ENCODE measurements at regions of chr17 and their contacts with region 1.

Region 1: GRCh38 chr17:43388359-43389045 is 10.3 kb upstream of the ARL4D start:
- DNase-seq: peak; percentile 96
- ATAC-seq: peak; percentile 74
- H3K4me3 ChIP-seq: peak overlapping the region; percentile 63 to 95 (median 91)
- H3K4me3 Mint-ChIP-seq: peak overlapping the region; percentile 89
- H3K27ac ChIP-seq: peak overlapping the region; percentile 95 to 96
- H3K27ac Mint-ChIP-seq: peak overlapping the region; percentile 98
- H3K4me1 ChIP-seq: peaks cover 18 to 21% of the 10 kb centered on the region in 2 donors
- H3K4me1 Mint-ChIP-seq: peaks cover 38% of the 10 kb centered on the region
- H3K27me3 ChIP-seq: no peaks in the 10 kb centered on the region
- H3K27me3 Mint-ChIP-seq: no peaks in the 10 kb centered on the region
- CTCF ChIP-seq: no peak

Region 2: GRCh38 chr17:42980398-42981397 is 407.8 kb before region 1 on chr17 and contains the start of gene RUNDC1:
- CTCF ChIA-PET with region 1: no interaction called
- POLR2A ChIA-PET with region 1: no interaction called
- intact Hi-C with region 1: loop called (anchors 1 kb)
- DNase-seq: peak; percentile 97
- ATAC-seq: peak; percentile 82
- H3K4me3 ChIP-seq: peak within 1 kb of the TSS; percentile 83 to 90 (median 88)
- H3K4me3 Mint-ChIP-seq: peak within 1 kb of the TSS; percentile 99
- H3K27ac ChIP-seq: peak within 1 kb of the TSS; percentile 80 to 86
- H3K27ac Mint-ChIP-seq: peak within 1 kb of the TSS; percentile 96
- H3K4me1 ChIP-seq: peaks cover 44 to 56% of the 10 kb centered on the region in 2 donors
- H3K4me1 Mint-ChIP-seq: peaks cover 48% of the 10 kb centered on the region
- H3K27me3 ChIP-seq: no peaks in the 10 kb centered on the region
- H3K27me3 Mint-ChIP-seq: no peaks in the 10 kb centered on the region
- CTCF ChIP-seq: peak; percentile 42
- total RNA-seq, gene RUNDC1: 43.7 and 45.6 TPM in 2 replicates

Region 3: DNA sequence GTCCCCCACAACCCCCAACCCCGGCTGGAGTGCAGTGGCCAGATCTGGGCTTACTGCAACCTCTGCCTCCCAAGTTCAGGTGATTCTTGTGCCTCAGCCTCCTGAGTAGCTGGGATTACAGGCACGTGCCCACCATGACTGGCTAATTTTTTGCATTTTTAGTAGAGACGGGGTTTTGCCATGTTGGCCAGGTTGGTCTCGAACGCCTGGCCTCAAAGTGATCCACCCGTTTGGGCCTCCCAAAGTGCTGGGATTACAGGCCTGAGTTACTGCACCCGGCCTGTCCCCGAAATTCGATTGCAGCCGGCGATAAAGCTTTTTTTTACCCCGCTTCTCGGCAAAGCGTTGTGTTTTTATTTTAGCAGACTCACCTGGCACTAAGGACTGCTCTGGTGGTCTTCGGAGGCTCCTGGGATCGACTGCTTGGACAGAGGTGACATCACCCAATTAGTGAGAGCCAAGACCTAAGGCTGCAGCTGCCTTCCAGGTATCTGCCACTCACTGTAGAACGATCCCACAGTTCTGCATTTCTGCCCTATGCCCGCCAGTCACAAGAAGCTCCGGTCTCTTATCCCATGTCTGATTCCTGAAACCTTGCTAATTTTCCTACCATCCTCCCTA is 71.9 kb before region 1 on chr17:
- CTCF ChIA-PET with region 1: interaction called, 5 read pairs
- POLR2A ChIA-PET with region 1: interaction called, 11 read pairs
- intact Hi-C with region 1: loop called (anchors 1 kb)
- DNase-seq: peak; percentile 78
- ATAC-seq: no peak
- H3K4me3 ChIP-seq: peak overlapping the region in 1 of 5 experiments; percentile 25
- H3K4me3 Mint-ChIP-seq: peak overlapping the region; percentile 29
- H3K27ac ChIP-seq: peak overlapping the region in 1 of 2 donors; percentile 46
- H3K27ac Mint-ChIP-seq: no peak overlapping the region
- H3K4me1 ChIP-seq: peaks cover 0 to 4% of the 10 kb centered on the region in 2 donors
- H3K4me1 Mint-ChIP-seq: peaks cover 16% of the 10 kb centered on the region
- H3K27me3 ChIP-seq: no peaks in the 10 kb centered on the region
- H3K27me3 Mint-ChIP-seq: no peaks in the 10 kb centered on the region
- CTCF ChIP-seq: no peak

Region 4: GRCh38 chr17:43360739-43361505 is 27.6 kb before region 1 on chr17:
- CTCF ChIA-PET with region 1: interaction called, 71 read pairs
- POLR2A ChIA-PET with region 1: interaction called, 220 read pairs
- intact Hi-C with region 1: loop called (anchors 2 kb)
- DNase-seq: peak; percentile 94
- ATAC-seq: peak; percentile 80
- H3K4me3 ChIP-seq: peak overlapping the region; percentile 61 to 88 (median 70)
- H3K4me3 Mint-ChIP-seq: peak overlapping the region; percentile 96
- H3K27ac ChIP-seq: peak overlapping the region; percentile 97 to 99
- H3K27ac Mint-ChIP-seq: peak overlapping the region; percentile 100
- H3K4me1 ChIP-seq: peaks cover 9 to 15% of the 10 kb centered on the region in 2 donors
- H3K4me1 Mint-ChIP-seq: peaks cover 21% of the 10 kb centered on the region
- H3K27me3 ChIP-seq: no peaks in the 10 kb centered on the region
- H3K27me3 Mint-ChIP-seq: no peaks in the 10 kb centered on the region
- CTCF ChIP-seq: no peak

Region 5: DNA sequence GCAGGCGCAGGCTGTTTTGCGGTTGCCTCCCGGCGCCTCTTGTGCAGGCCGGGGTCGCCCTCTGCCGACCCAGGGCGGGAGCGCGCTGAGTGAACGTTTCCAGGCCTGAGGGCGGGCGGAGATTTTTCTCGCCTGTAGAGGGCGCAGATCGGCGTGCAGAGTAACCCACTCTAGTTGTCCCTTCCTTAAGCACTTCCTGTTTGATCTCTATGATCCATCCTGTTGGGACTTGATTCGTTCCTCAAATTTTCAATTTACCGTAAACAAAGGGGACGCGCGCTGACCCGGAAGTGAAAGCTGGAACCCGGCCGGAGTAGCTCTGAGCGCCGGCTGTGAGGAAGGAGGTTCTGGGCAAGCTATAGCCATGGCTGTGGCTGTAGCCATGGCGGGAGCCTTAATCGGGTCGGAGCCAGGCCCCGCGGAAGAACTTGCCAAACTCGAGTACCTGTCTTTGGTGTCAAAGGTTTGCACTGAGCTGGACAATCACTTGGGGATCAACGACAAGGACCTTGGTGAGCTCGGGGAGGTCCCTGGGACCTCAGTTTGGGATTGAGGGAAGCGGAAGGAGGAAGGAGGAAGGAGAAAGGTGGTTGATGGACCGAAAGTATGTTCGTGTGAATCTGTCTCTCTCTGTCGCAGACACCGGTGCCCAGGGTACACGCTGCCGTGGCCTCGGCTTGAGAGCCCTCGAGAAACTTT is 95.3 kb after region 1 on chr17 and contains the start of gene DHX8:
- CTCF ChIA-PET with region 1: interaction called, 218 read pairs
- POLR2A ChIA-PET with region 1: interaction called, 22 read pairs
- intact Hi-C with region 1: loop called (anchors 1 kb)
- DNase-seq: peak; percentile 99
- ATAC-seq: peak; percentile 98
- H3K4me3 ChIP-seq: peak within 1 kb of the TSS; percentile 84 to 99 (median 98)
- H3K4me3 Mint-ChIP-seq: peak within 1 kb of the TSS; percentile 100
- H3K27ac ChIP-seq: peak within 1 kb of the TSS; percentile 82 to 86
- H3K27ac Mint-ChIP-seq: peak within 1 kb of the TSS; percentile 98
- H3K4me1 ChIP-seq: peaks cover 17 to 23% of the 10 kb centered on the region in 2 donors
- H3K4me1 Mint-ChIP-seq: peaks cover 29% of the 10 kb centered on the region
- H3K27me3 ChIP-seq: no peaks in the 10 kb centered on the region
- H3K27me3 Mint-ChIP-seq: no peaks in the 10 kb centered on the region
- CTCF ChIP-seq: peak; percentile 100
- total RNA-seq, gene DHX8: 63.3 and 64.4 TPM in 2 replicates